WTC11 (cell line): ENCODE measurements at regions of chr19 and their contacts with region 1.

Region 1: GRCh38 chr19:19732579-19733501 is at the start of gene ZNF14:
- DNase-seq: peak; percentile 97
- ATAC-seq: peak; percentile 99
- H3K4me3 Mint-ChIP-seq: peak within 1 kb of the TSS; percentile 91
- H3K27ac Mint-ChIP-seq: peak within 1 kb of the TSS; percentile 89
- H3K4me1 Mint-ChIP-seq: peaks cover 9% of the 10 kb centered on the region
- H3K27me3 Mint-ChIP-seq: peaks cover 7% of the 10 kb centered on the region
- CTCF ChIP-seq: no peak
- total RNA-seq, gene ZNF14: 5.7 to 6.6 TPM (median 6.6 TPM) in 3 replicates

Region 2: GRCh38 chr19:19657397-19657783 is 75.5 kb before region 1 on chr19:
- CTCF ChIA-PET with region 1: no interaction called
- POLR2A ChIA-PET with region 1: no interaction called
- DNase-seq: no peak
- ATAC-seq: no peak
- H3K4me3 Mint-ChIP-seq: no peak overlapping the region
- H3K27ac Mint-ChIP-seq: no peak overlapping the region
- H3K4me1 Mint-ChIP-seq: peaks cover 12% of the 10 kb centered on the region
- H3K27me3 Mint-ChIP-seq: no peaks in the 10 kb centered on the region
- CTCF ChIP-seq: no peak

Region 3: GRCh38 chr19:19745496-19746285 is 12.9 kb after region 1 on chr19:
- CTCF ChIA-PET with region 1: interaction called, 11 read pairs
- POLR2A ChIA-PET with region 1: interaction called, 6 read pairs
- DNase-seq: no peak
- ATAC-seq: no peak
- H3K4me3 Mint-ChIP-seq: no peak overlapping the region
- H3K27ac Mint-ChIP-seq: no peak overlapping the region
- H3K4me1 Mint-ChIP-seq: no peaks in the 10 kb centered on the region
- H3K27me3 Mint-ChIP-seq: peaks cover 17% of the 10 kb centered on the region
- CTCF ChIP-seq: no peak

Region 4: DNA sequence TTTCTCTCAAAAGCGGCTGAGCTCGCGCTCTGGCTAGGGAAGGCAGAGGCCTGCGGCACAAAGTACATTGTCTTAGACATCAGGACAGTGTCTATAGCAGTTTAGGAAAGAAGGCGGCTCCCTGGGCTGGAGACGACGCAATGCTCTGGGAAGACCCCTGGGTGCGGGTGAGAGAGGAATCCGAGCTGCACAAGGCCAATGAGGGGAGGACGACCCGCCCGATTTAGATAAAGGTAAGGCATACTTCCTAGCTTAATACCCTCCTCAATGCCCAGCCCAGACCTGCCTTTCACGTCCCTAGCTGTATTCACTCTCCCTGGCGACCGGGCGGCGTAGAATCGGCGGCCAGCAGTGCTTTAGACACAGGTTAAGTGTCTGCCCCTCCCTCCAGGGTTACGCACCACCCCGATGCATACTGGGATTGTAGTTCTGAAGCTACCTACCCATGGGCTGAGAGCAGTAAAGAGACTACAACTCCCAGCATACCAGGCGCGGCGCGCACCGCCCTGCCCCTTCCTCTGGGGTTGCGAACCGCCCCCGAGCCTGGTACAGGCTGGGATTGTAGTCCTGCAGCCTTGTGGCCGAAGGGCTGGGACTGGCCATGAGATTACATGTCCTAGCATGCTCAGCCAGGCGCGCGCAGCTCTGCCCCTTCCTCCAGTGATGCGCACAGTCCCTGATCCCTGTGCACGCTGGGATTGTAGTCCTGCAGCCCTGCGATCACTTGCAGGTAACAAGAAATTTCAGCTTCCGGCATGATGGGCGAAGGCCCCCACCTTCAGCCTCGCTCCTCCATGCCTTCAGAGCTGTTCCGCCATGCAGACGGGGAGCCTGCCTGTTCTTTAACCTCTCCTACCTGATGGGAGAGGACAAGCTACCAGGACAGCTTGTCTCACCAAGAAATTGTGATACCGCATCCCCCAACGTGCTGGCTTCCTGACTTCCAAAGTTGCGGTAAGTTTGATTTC is 43.5 kb after region 1 on chr19:
- CTCF ChIA-PET with region 1: interaction called, 12 read pairs
- POLR2A ChIA-PET with region 1: interaction called, 4 read pairs
- DNase-seq: peak; percentile 99
- ATAC-seq: peak; percentile 96
- H3K4me3 Mint-ChIP-seq: peak overlapping the region; percentile 98
- H3K27ac Mint-ChIP-seq: peak overlapping the region; percentile 95
- H3K4me1 Mint-ChIP-seq: peaks cover 25% of the 10 kb centered on the region
- H3K27me3 Mint-ChIP-seq: no peaks in the 10 kb centered on the region
- CTCF ChIP-seq: no peak